Activated CD4-positive, alpha-beta T cell treated with anti-CD3 and anti-CD28 coated beads for 36 hours (primary cell): ENCODE measurements at regions of chr3 and their contacts with region 1.

Region 1: GRCh38 chr3:143972505-143973255 is 1.1 kb downstream of the DIPK2A start:
- DNase-seq: peak; percentile 78
- ATAC-seq: peak; percentile 11
- H3K4me3 Mint-ChIP-seq: peak overlapping the region; percentile 96
- H3K27ac Mint-ChIP-seq: peak overlapping the region; percentile 87
- H3K4me1 Mint-ChIP-seq: peaks cover 29% of the 10 kb centered on the region
- H3K27me3 Mint-ChIP-seq: peaks cover 4% of the 10 kb centered on the region

Region 2: GRCh38 chr3:142723968-142724681 is 1248.6 kb before region 1 on chr3 and contains the start of gene TRPC1:
- CTCF ChIA-PET with region 1: no interaction called
- POLR2A ChIA-PET with region 1: no interaction called
- intact Hi-C with region 1: loop called in 1 of 2 experiments (anchors 2 kb)
- DNase-seq: peak; percentile 87
- ATAC-seq: peak; percentile 95
- H3K4me3 Mint-ChIP-seq: peak within 1 kb of the TSS; percentile 82
- H3K27ac Mint-ChIP-seq: peak within 1 kb of the TSS; percentile 87
- H3K4me1 Mint-ChIP-seq: peaks cover 11% of the 10 kb centered on the region
- H3K27me3 Mint-ChIP-seq: peaks cover 37% of the 10 kb centered on the region
- total RNA-seq, gene TRPC1: 4.7 to 6.2 TPM

Region 3: GRCh38 chr3:143060906-143061305 is 911.8 kb before region 1 on chr3:
- CTCF ChIA-PET with region 1: no interaction called
- POLR2A ChIA-PET with region 1: no interaction called
- intact Hi-C with region 1: loop called in 1 of 2 experiments (anchors 10 kb)
- DNase-seq: no peak
- ATAC-seq: peak; percentile 95
- H3K4me3 Mint-ChIP-seq: no peak overlapping the region
- H3K27ac Mint-ChIP-seq: peak overlapping the region; percentile 70
- H3K4me1 Mint-ChIP-seq: peaks cover 26% of the 10 kb centered on the region
- H3K27me3 Mint-ChIP-seq: no peaks in the 10 kb centered on the region

Region 4: GRCh38 chr3:143302638-143303171 is 670.0 kb before region 1 on chr3:
- CTCF ChIA-PET with region 1: no interaction called
- POLR2A ChIA-PET with region 1: no interaction called
- intact Hi-C with region 1: no loop called
- DNase-seq: no peak
- ATAC-seq: no peak
- H3K4me3 Mint-ChIP-seq: no peak overlapping the region
- H3K27ac Mint-ChIP-seq: no peak overlapping the region
- H3K4me1 Mint-ChIP-seq: peaks cover 14% of the 10 kb centered on the region
- H3K27me3 Mint-ChIP-seq: no peaks in the 10 kb centered on the region

Region 5: GRCh38 chr3:143775459-143775858 is 197.2 kb before region 1 on chr3:
- CTCF ChIA-PET with region 1: interaction called, 4 read pairs
- POLR2A ChIA-PET with region 1: interaction called, 4 read pairs
- intact Hi-C with region 1: loop called in 1 of 2 experiments (anchors 5 kb)
- DNase-seq: peak; percentile 14
- ATAC-seq: peak; percentile 82
- H3K4me3 Mint-ChIP-seq: no peak overlapping the region
- H3K27ac Mint-ChIP-seq: no peak overlapping the region
- H3K4me1 Mint-ChIP-seq: peaks cover 3% of the 10 kb centered on the region
- H3K27me3 Mint-ChIP-seq: no peaks in the 10 kb centered on the region

Region 6: GRCh38 chr3:143847787-143848631 is 124.7 kb before region 1 on chr3 and contains the start of gene SLC9A9:
- CTCF ChIA-PET with region 1: no interaction called
- POLR2A ChIA-PET with region 1: no interaction called
- intact Hi-C with region 1: loop called (anchors 1 to 2 kb)
- DNase-seq: peak; percentile 60
- ATAC-seq: peak; percentile 93
- H3K4me3 Mint-ChIP-seq: peak within 1 kb of the TSS; percentile 80
- H3K27ac Mint-ChIP-seq: peak within 1 kb of the TSS; percentile 87
- H3K4me1 Mint-ChIP-seq: peaks cover 47% of the 10 kb centered on the region
- H3K27me3 Mint-ChIP-seq: no peaks in the 10 kb centered on the region
- total RNA-seq, gene SLC9A9: 1.4 to 1.6 TPM